ENCODE measurements at regions of chr11 and their contacts with region 1.

Region 1: DNA sequence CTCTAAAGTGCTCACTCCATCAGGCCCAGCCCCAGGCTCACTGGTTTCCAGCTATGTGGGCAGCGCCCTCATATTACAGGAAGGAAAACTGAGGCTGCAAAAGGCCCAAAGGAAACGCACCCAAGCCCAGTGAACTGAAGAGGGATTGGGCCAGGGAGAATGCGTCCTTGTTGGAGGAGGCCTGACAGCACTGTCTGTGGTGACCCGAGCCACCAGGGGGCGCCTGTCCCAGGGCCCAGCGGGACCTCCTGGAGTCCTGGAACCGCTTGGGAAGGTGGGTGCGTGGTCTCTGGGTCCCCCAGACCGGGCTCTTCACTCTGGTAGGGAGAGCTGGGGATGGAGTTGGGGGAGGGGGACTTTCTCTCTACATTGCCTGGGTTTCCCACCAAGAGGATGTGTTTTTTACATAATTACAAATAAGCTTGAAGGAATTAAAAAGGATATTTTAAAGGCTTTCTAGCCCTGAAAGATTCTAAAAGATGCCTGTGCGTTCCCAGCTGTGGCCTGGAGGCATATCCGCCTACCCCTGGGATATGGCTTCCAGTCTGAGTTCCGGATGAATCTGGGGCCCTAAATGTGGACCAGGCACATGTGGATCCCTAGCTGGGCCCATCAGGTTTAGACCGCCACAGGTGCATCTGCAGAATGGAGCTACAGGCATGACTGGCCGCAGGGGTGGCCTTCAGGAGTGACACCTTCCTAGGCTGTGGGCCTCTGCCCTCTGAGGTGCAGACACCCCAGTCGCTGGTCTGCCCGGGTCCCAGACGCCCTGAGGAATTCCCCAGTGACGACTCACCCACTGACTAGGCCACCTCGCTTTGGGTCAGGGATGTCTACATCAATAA is 4.2 kb downstream of the SPI1 start:
- DNase-seq: peak; percentile 83 to 92 (median 85)
- ATAC-seq: peak; percentile 44 to 86 (median 76)
- H3K4me3 ChIP-seq: peak overlapping the region in 1 of 12 donors; percentile 70
- H3K27ac ChIP-seq: peak overlapping the region in 3 of 12 donors; percentile 12 to 96 (median 26)
- H3K4me1 ChIP-seq: peaks cover 0 to 25% (median 0%) of the 10 kb centered on the region in 12 donors
- H3K27me3 ChIP-seq: no peaks in the 10 kb centered on the region
- CTCF ChIP-seq: peak; percentile 87 to 98 (median 96)
- POLR2A ChIP-seq: no peak

Region 2: GRCh38 chr11:47407746-47408590 is 33.9 kb after region 1 on chr11 and contains the start of gene SLC39A13:
- intact Hi-C with region 1: loop called (anchors 1 to 5 kb)
- DNase-seq: peak; percentile 95 to 98 (median 96)
- ATAC-seq: peak; percentile 80 to 92 (median 90)
- H3K4me3 ChIP-seq: peak within 1 kb of the TSS; percentile 48 to 91 (median 80)
- H3K27ac ChIP-seq: peak within 1 kb of the TSS; percentile 83 to 98 (median 93)
- H3K4me1 ChIP-seq: peaks cover 0 to 45% (median 28%) of the 10 kb centered on the region in 12 donors
- H3K27me3 ChIP-seq: no peaks in the 10 kb centered on the region
- CTCF ChIP-seq: peak; percentile 74 to 97 (median 86)
- POLR2A ChIP-seq: peak in 1 of 2 donors; percentile 96
- total RNA-seq, gene SLC39A13: 33.5 to 82.8 (median 45.3) TPM

Region 3: GRCh38 chr11:47454180-47454644 is 80.1 kb after region 1 on chr11:
- intact Hi-C with region 1: loop called (anchors 1 to 5 kb)
- DNase-seq: peak in 4 of 5 donors; percentile 61 to 79 (median 70)
- ATAC-seq: peak; percentile 56 to 92 (median 88)
- H3K4me3 ChIP-seq: no peak overlapping the region
- H3K27ac ChIP-seq: no peak overlapping the region
- H3K4me1 ChIP-seq: peaks cover 0 to 6% (median 0%) of the 10 kb centered on the region in 12 donors
- H3K27me3 ChIP-seq: no peaks in the 10 kb centered on the region
- CTCF ChIP-seq: peak; percentile 66 to 87 (median 78)
- POLR2A ChIP-seq: no peak

Region 4: GRCh38 chr11:47616726-47617416 is 242.8 kb after region 1 on chr11:
- intact Hi-C with region 1: loop called in 3 of 10 experiments (anchors 2 to 10 kb)
- DNase-seq: peak in 4 of 5 donors; percentile 46 to 66 (median 62)
- ATAC-seq: peak; percentile 49 to 85 (median 82)
- H3K4me3 ChIP-seq: no peak overlapping the region
- H3K27ac ChIP-seq: peak overlapping the region in 1 of 12 donors; percentile 4
- H3K4me1 ChIP-seq: peaks cover 0 to 12% (median 3%) of the 10 kb centered on the region in 12 donors
- H3K27me3 ChIP-seq: no peaks in the 10 kb centered on the region
- CTCF ChIP-seq: peak; percentile 19 to 85 (median 70)
- POLR2A ChIP-seq: no peak

Region 5: DNA sequence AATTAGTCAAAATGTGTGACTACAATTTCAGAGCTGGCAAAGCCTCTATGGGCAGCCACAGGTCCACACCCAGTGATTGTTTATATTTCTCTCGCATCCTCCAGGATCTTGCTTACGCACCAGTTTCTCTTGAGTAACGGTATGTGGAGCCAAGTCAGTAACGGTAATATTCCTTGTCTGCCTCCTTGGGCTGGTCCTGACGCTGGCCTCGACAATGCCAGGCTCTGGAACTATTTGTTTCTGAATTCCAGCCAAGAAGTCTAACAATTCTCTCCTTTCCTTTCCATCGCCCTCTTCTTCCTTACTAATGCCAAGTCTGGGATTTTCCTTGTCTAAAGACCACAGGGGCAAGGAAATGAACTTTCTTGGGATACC is 484.1 kb after region 1 on chr11:
- intact Hi-C with region 1: loop called in 6 of 10 experiments (anchors 5 to 10 kb)
- DNase-seq: no peak
- ATAC-seq: peak; percentile 27 to 69 (median 49)
- H3K4me3 ChIP-seq: no peak overlapping the region
- H3K27ac ChIP-seq: peak overlapping the region in 1 of 12 donors; percentile 24
- H3K4me1 ChIP-seq: peaks cover 0 to 33% (median 0%) of the 10 kb centered on the region in 12 donors
- H3K27me3 ChIP-seq: no peaks in the 10 kb centered on the region
- CTCF ChIP-seq: no peak
- POLR2A ChIP-seq: no peak